Activated B cell treated with CpG ODN at 0.5 μM for 24 hours (primary cell): ENCODE measurements at regions of chr5 and their contacts with region 1.

Region 1: DNA sequence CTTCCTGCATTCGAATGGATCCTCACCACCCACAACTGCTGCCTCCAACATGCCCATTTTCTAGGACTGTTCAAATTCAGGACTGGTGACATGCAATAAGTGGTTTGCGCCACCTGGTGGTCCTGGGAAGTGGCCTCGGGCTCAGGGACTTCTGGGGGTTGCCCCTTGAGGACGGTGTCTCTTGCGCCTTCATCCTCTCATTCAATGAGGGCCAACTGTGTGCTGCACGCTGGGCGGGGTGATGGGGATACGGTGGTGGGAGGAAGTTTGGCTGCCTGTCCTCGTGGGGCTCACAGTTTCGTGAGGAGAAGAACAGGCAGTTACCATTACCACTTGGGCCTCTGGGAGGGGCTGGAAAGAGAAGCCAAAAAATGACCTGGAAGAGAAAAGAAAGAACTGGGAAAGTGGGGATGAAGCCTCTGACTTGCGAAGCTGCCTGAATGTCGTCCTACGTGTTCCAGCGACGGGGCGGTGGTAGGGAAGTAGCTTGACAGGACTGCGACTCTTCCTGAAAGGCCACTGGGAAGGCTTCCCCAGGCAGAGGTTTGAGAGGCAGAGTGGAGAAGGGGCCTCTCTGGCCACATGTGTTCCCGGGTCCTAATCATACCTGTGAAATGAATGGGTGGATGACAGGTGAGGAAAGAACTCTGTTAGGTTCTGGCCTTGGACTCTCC is 49.0 kb downstream of the PSD2 start:
- DNase-seq: peak; percentile 57
- ATAC-seq: peak; percentile 40
- H3K4me3 Mint-ChIP-seq: peak overlapping the region; percentile 5
- H3K27ac Mint-ChIP-seq: no peak overlapping the region
- H3K4me1 Mint-ChIP-seq: peaks cover 16% of the 10 kb centered on the region
- H3K27me3 Mint-ChIP-seq: peaks cover 13% of the 10 kb centered on the region
- CTCF ChIP-seq: peak; percentile 61

Region 2: GRCh38 chr5:139774980-139775661 is 69.5 kb before region 1 on chr5:
- CTCF ChIA-PET with region 1: interaction called, 3 read pairs
- POLR2A ChIA-PET with region 1: interaction called, 13 read pairs
- intact Hi-C with region 1: no loop called
- DNase-seq: peak; percentile 83
- ATAC-seq: peak; percentile 96
- H3K4me3 Mint-ChIP-seq: peak overlapping the region; percentile 59
- H3K27ac Mint-ChIP-seq: peak overlapping the region; percentile 46
- H3K4me1 Mint-ChIP-seq: peaks cover 12% of the 10 kb centered on the region
- H3K27me3 Mint-ChIP-seq: peaks cover 3% of the 10 kb centered on the region
- CTCF ChIP-seq: peak; percentile 84

Region 3: DNA sequence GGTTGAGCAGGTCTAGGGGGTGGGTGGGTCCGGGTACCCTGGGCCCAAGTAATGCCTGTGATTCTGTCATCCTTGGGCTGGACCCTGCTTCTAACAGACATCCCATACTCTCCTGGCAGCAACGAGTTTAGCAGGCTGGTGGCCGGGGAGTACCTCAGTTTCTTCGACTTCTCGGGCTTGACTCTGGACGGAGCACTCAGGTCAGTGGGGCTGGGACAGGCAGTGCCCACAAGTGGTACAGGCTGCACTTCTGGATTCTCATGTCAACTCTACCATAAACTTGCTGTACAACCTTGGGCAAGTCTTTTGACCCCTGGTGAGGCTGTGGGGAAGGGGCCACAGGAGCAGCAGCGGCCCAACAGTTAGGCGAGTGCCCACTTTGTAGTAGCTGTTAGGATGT is 27.2 kb before region 1 on chr5:
- CTCF ChIA-PET with region 1: no interaction called
- POLR2A ChIA-PET with region 1: no interaction called
- intact Hi-C with region 1: no loop called
- DNase-seq: no peak
- ATAC-seq: no peak
- H3K4me3 Mint-ChIP-seq: no peak overlapping the region
- H3K27ac Mint-ChIP-seq: no peak overlapping the region
- H3K4me1 Mint-ChIP-seq: no peaks in the 10 kb centered on the region
- H3K27me3 Mint-ChIP-seq: peaks cover 13% of the 10 kb centered on the region
- CTCF ChIP-seq: no peak

Region 4: GRCh38 chr5:140107312-140108083 is 262.9 kb after region 1 on chr5:
- CTCF ChIA-PET with region 1: no interaction called
- POLR2A ChIA-PET with region 1: interaction called, 4 read pairs
- intact Hi-C with region 1: loop called (anchors 5 kb)
- DNase-seq: peak; percentile 92
- ATAC-seq: peak; percentile 89
- H3K4me3 Mint-ChIP-seq: peak overlapping the region; percentile 98
- H3K27ac Mint-ChIP-seq: peak overlapping the region; percentile 97
- H3K4me1 Mint-ChIP-seq: peaks cover 44% of the 10 kb centered on the region
- H3K27me3 Mint-ChIP-seq: peaks cover 15% of the 10 kb centered on the region
- CTCF ChIP-seq: no peak

Region 5: GRCh38 chr5:140295414-140295813 is 450.8 kb after region 1 on chr5:
- CTCF ChIA-PET with region 1: no interaction called
- POLR2A ChIA-PET with region 1: no interaction called
- intact Hi-C with region 1: no loop called
- DNase-seq: no peak
- ATAC-seq: no peak
- H3K4me3 Mint-ChIP-seq: no peak overlapping the region
- H3K27ac Mint-ChIP-seq: no peak overlapping the region
- H3K4me1 Mint-ChIP-seq: peaks cover 27% of the 10 kb centered on the region
- H3K27me3 Mint-ChIP-seq: no peaks in the 10 kb centered on the region
- CTCF ChIP-seq: no peak

Region 6: GRCh38 chr5:140741967-140742366 is 897.4 kb after region 1 on chr5:
- CTCF ChIA-PET with region 1: no interaction called
- POLR2A ChIA-PET with region 1: no interaction called
- intact Hi-C with region 1: no loop called
- DNase-seq: no peak
- ATAC-seq: no peak
- H3K4me3 Mint-ChIP-seq: no peak overlapping the region
- H3K27ac Mint-ChIP-seq: no peak overlapping the region
- H3K4me1 Mint-ChIP-seq: no peaks in the 10 kb centered on the region
- H3K27me3 Mint-ChIP-seq: peaks cover 16% of the 10 kb centered on the region
- CTCF ChIP-seq: no peak